ENCODE measurements at regions of chrX and their contacts with region 1.

Region 1: DNA sequence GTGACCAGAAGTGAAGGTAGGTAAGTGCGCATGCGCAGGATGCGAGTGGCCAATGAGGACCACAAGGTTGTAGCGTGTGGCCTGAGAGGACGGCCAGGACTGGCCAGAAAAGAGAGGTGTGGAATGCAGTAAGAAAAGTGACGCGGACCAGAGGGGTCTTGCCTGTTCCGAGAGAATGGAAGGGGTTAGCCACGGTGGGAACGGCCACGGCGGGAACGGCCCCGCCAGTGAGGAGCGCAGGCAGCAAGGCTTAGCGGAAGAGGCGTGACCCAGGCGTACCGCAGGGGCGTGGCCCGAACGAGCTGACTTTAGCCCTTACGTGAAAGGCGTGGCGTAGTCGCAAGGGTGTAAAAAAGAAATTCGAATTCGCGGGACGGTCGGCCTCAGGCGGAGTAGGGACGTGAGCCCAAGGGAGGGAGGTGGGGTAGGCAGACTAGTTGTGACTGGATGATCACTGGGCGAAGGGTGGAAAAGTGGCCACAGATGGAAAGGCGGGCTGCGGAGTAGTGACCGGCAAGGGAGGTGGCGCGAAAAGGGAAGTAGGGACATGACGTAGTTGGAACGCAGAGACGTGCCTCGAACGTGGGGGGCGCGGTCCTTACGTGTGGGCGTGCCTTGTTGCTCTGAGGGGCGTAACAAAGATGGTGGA is 10.4 kb upstream of the CLTRN start:
- DNase-seq: peak; percentile 95
- H3K4me3 ChIP-seq: peak overlapping the region; percentile 75
- H3K27ac ChIP-seq: peak overlapping the region; percentile 96
- H3K4me1 ChIP-seq: peaks cover 25% of the 10 kb centered on the region
- H3K27me3 ChIP-seq: peaks cover 1% of the 10 kb centered on the region
- CTCF ChIP-seq: no peak

Region 2: GRCh38 chrX:15349046-15349445 is 325.9 kb before region 1 on chrX:
- CTCF ChIA-PET with region 1: no interaction called
- POLR2A ChIA-PET with region 1: no interaction called
- intact Hi-C with region 1: loop called (anchors 10 kb)
- DNase-seq: peak; percentile 82
- H3K4me3 ChIP-seq: no peak overlapping the region
- H3K27ac ChIP-seq: no peak overlapping the region
- H3K4me1 ChIP-seq: no peaks in the 10 kb centered on the region
- H3K27me3 ChIP-seq: peaks cover 3% of the 10 kb centered on the region
- CTCF ChIP-seq: peak; percentile 69

Region 3: GRCh38 chrX:15493118-15493962 is 181.6 kb before region 1 on chrX and contains the start of gene PIR:
- CTCF ChIA-PET with region 1: no interaction called
- POLR2A ChIA-PET with region 1: no interaction called
- intact Hi-C with region 1: loop called (anchors 10 kb)
- DNase-seq: peak; percentile 88
- H3K4me3 ChIP-seq: peak within 1 kb of the TSS; percentile 52
- H3K27ac ChIP-seq: peak within 1 kb of the TSS; percentile 78
- H3K4me1 ChIP-seq: no peaks in the 10 kb centered on the region
- H3K27me3 ChIP-seq: no peaks in the 10 kb centered on the region
- CTCF ChIP-seq: peak; percentile 70
- total RNA-seq, gene PIR: 58.0 and 74.2 TPM in 2 replicates

Region 4: GRCh38 chrX:15594371-15594770 is 80.6 kb before region 1 on chrX:
- CTCF ChIA-PET with region 1: no interaction called
- POLR2A ChIA-PET with region 1: no interaction called
- intact Hi-C with region 1: no loop called
- DNase-seq: no peak
- H3K4me3 ChIP-seq: no peak overlapping the region
- H3K27ac ChIP-seq: no peak overlapping the region
- H3K4me1 ChIP-seq: no peaks in the 10 kb centered on the region
- H3K27me3 ChIP-seq: peaks cover 80% of the 10 kb centered on the region
- CTCF ChIP-seq: no peak

Region 5: DNA sequence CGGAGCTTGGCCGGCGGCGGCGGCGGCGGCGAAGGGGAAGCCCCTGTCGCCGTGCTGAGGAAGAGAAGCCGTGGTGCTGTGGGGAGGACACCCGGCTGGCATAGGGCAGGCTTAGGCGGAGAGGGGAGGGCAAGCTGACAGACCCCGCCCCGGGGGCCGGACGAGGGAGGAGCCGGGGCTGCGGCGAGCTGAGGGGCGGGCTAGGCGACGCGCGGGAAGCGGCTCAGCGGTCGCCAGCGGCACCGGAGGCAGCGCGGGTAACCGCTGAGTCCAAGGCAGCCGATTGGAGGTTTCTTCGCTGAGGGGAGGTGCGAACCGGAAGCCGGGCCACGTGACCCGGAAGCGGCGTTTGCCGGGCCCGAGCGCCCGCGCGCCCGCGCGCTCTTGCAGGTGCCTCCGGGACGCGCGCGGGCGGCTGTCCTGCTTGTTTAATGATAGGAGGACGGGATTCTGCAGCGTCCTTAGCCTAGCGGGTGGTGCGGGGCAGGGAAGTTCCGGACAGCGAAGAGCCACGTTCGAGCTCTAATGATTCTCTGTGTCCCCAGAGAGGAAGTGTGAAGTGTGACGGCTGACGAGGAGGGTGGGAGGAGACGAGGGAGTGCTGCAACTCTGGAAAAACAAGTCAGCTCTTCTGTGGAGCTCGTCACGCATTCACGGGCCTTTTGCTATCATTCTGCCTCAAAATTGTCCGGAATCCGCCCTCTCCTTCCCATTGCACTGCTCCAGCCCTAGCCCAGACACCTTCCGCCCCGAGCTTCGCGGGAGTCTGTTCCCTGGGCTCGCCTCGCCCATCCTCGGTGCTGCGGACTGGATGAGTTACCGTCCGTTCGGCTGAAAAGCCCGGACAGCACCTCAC is 180.0 kb after region 1 on chrX and contains the start of gene AP1S2:
- CTCF ChIA-PET with region 1: no interaction called
- POLR2A ChIA-PET with region 1: interaction called, 10 read pairs
- intact Hi-C with region 1: no loop called
- DNase-seq: peak; percentile 98
- H3K4me3 ChIP-seq: peak within 1 kb of the TSS; percentile 79
- H3K27ac ChIP-seq: peak within 1 kb of the TSS; percentile 84
- H3K4me1 ChIP-seq: peaks cover 10% of the 10 kb centered on the region
- H3K27me3 ChIP-seq: no peaks in the 10 kb centered on the region
- CTCF ChIP-seq: no peak
- total RNA-seq, gene AP1S2: 55.3 and 59.3 TPM in 2 replicates

Measured in A673 (cell line).